ENCODE measurements at regions of chr13 and their contacts with region 1.

Region 1: GRCh38 chr13:113393563-113394338 is 29.8 kb upstream of the GRTP1 start:
- DNase-seq: peak; percentile 93
- H3K4me3 ChIP-seq: peak overlapping the region; percentile 67
- H3K27ac ChIP-seq: no peak overlapping the region
- H3K4me1 ChIP-seq: peaks cover 1% of the 10 kb centered on the region; the same call in 1 of the 2 replicates
- H3K27me3 ChIP-seq: no peaks in the 10 kb centered on the region

Region 2: GRCh38 chr13:112198396-112199010 is 1195.2 kb before region 1 on chr13:
- in situ Hi-C with region 1: no loop called
- DNase-seq: no peak
- H3K4me3 ChIP-seq: no peak overlapping the region
- H3K27ac ChIP-seq: no peak overlapping the region
- H3K4me1 ChIP-seq: no peaks in the 10 kb centered on the region
- H3K27me3 ChIP-seq: no peaks in the 10 kb centered on the region

Region 3: DNA sequence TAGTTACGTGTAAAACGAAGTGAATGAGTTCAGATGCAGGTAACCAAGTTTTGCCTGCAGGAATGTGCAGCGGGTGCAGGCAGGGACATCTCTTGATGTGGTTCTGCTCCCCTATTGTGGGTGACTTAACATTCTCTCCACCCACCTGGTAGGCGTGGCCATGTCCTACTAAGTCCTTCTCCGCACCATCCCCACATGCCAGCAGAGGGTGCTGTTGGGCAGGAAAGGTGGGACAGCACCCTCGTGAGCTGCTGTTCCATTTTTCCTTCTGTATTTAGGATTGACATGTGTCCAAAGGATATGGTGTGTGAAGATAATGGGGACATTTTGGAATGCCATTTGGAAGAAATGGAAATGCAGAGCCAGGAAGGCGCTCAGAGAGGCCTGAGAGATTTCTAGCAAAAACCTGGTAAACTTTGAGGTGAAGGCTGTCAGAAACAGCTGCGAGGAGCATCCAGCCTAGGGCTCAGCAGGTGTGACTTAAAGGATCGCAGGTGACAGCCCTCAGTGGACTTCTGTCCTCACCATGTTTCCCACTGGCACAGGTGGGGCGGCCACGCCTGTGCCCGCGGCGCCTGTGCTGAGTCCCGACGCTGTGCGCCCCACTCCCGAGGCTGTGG is 451.0 kb before region 1 on chr13:
- in situ Hi-C with region 1: loop called (anchors 25 kb)
- DNase-seq: peak; percentile 95
- H3K4me3 ChIP-seq: peak overlapping the region; percentile 69
- H3K27ac ChIP-seq: no peak overlapping the region
- H3K4me1 ChIP-seq: 0 out of 2 replicates have a peak, but pooled peaks cover 3% of the 10 kb centered on the region
- H3K27me3 ChIP-seq: peaks cover 9% of the 10 kb centered on the region

Region 4: DNA sequence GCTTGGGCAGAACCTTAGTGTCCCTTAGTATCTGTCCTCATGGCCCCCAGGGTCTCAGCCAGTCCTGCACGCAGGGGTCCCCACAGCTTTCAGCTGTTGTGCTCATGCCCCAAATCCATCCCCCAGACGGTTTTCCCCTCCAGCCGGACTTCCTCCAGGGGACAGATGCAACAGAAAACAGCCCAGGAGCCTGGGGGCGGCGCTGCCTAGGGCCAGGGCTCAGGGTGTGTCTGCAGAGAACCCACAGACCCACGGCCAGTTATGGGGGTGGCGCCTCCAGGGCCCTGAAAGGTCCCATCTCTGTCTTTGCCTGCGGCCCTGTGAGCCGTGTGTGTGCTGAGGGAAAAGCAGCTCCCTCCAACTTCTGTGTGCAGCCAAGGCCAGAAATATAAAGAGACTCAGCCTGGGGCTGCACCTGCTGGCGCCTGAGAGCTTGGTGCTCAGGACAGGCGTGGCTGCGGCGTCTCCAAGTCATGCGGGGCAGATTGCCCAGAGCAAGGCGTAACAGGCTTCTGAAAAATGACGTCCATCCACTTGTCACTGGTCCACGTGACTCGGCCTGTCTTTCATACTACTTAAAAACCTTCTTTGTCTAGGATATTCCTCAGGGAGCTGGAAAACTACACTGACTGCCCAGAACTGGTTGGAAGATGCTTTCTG is 310.2 kb before region 1 on chr13:
- in situ Hi-C with region 1: no loop called
- DNase-seq: peak; percentile 73
- H3K4me3 ChIP-seq: no peak overlapping the region
- H3K27ac ChIP-seq: no peak overlapping the region
- H3K4me1 ChIP-seq: no peaks in the 10 kb centered on the region
- H3K27me3 ChIP-seq: peaks cover 6% of the 10 kb centered on the region; the same call in 1 of the 2 replicates